ENCODE measurements at regions of chr5 and their contacts with region 1.

Region 1: GRCh38 chr5:145975361-145976066 is 39.1 kb downstream of the SH3RF2 start:
- H3K4me3 Mint-ChIP-seq: no peak overlapping the region
- H3K27ac Mint-ChIP-seq: no peak overlapping the region
- H3K4me1 Mint-ChIP-seq: no peaks in the 10 kb centered on the region
- H3K27me3 Mint-ChIP-seq: no peaks in the 10 kb centered on the region

Region 2: GRCh38 chr5:146034125-146034524 is 58.6 kb after region 1 on chr5:
- intact Hi-C with region 1: loop called (anchors 10 kb)
- H3K4me3 Mint-ChIP-seq: no peak overlapping the region
- H3K27ac Mint-ChIP-seq: no peak overlapping the region
- H3K4me1 Mint-ChIP-seq: peaks cover 23% of the 10 kb centered on the region
- H3K27me3 Mint-ChIP-seq: no peaks in the 10 kb centered on the region

Region 3: GRCh38 chr5:146291421-146292074 is 316.0 kb after region 1 on chr5:
- intact Hi-C with region 1: no loop called
- H3K4me3 Mint-ChIP-seq: no peak overlapping the region
- H3K27ac Mint-ChIP-seq: no peak overlapping the region
- H3K4me1 Mint-ChIP-seq: no peaks in the 10 kb centered on the region
- H3K27me3 Mint-ChIP-seq: no peaks in the 10 kb centered on the region

Measured in dendritic cell treated with granulocyte-macrophage colony-stimulating factor and Interleukin-4, amounts not matched to agents 40 ng/mL and 50 ng/mL, for 4 days (primary cell).